A549 (cell line): ENCODE measurements at regions of chr12 and their contacts with region 1.

Region 1: GRCh38 chr12:66269757-66270383 is 32.4 kb upstream of the HELB start:
- DNase-seq: peak; percentile 47 to 53
- ATAC-seq: peak; percentile 83 to 90; a peak in 5 of 6 replicates
- H3K4me3 ChIP-seq: no peak overlapping the region
- H3K27ac ChIP-seq: no peak overlapping the region
- H3K4me1 ChIP-seq: no peaks in the 10 kb centered on the region
- CTCF ChIP-seq: peak; percentile 70
- EP300 ChIP-seq: no peak
- POLR2A ChIP-seq: no peak
- RAD21 ChIP-seq: peak; percentile 63 to 65

Region 2: DNA sequence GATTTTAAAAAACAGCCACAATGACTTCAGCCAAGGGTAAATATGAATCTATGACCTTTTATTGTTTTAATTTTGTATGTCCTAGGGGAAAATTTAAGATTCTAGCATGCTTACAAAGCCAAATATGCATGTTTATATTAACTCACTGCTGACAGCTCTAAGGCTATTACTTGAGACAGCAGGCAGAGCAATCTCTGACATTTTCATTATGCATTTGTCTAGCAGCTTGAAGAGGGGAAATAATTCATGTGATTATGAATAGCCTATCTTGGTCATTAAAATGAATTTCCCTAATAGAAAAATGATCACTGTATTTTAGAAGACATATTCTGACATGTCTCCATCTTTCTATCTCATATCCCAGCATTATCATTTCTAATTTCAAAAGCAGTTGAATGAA is 14.1 kb before region 1 on chr12:
- CTCF ChIA-PET with region 1: no interaction called
- POLR2A ChIA-PET with region 1: no interaction called
- DNase-seq: no peak
- ATAC-seq: no peak
- H3K4me3 ChIP-seq: no peak overlapping the region
- H3K27ac ChIP-seq: no peak overlapping the region
- H3K4me1 ChIP-seq: no peaks in the 10 kb centered on the region
- CTCF ChIP-seq: no peak
- EP300 ChIP-seq: no peak
- POLR2A ChIP-seq: no peak
- RAD21 ChIP-seq: no peak

Region 3: DNA sequence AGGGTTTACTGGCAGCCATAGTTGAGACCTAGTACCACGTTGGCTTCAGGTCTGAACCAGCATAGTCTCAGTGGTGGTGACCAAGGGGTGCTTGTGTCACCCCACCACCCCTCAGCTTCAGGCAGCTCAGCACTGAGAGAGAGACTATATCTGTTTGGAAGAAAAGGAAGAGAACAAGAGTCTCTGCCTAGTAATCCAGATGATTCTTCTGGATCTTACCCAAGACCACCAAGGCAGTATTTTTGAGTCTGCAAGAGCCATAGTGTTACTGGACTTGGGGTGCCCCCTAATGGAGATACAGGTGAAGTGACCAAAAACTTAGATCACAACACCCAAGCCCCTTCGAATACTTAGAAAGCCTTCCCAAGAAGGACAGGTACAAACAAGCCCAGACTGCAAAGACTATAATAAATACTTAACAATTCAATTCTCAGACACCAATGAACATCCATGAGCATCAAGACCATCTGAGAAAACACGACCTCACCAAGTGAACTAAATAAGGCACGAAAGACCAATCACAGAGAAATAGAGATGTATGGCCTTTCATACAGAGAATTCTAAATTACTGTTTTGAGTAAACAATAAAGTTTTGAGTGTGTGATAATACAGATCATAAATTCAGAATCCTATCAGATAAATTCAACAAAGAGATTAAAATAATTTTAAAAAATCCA is 139.5 kb after region 1 on chr12:
- CTCF ChIA-PET with region 1: interaction called, 10 read pairs
- POLR2A ChIA-PET with region 1: no interaction called
- DNase-seq: peak in 1 of 2 experiments; percentile 59
- ATAC-seq: peak in 1 of 2 experiments; percentile 82; a peak in 3 of 6 replicates
- H3K4me3 ChIP-seq: no peak overlapping the region
- H3K27ac ChIP-seq: no peak overlapping the region
- H3K4me1 ChIP-seq: no peaks in the 10 kb centered on the region
- CTCF ChIP-seq: peak; percentile 64
- EP300 ChIP-seq: no peak
- POLR2A ChIP-seq: no peak
- RAD21 ChIP-seq: peak; percentile 72 to 80